Gastrocnemius medialis (tissue), 4 donors: ENCODE measurements at regions of chr19 and their contacts with region 1.

Region 1: GRCh38 chr19:21593934-21594820 is 88.8 kb downstream of the ZNF429 start:
- DNase-seq: peak in 1 of 2 donors; percentile 86
- ATAC-seq: peak; percentile 45 to 56
- H3K4me3 ChIP-seq: peak overlapping the region in 1 of 4 donors; percentile 5
- H3K27ac ChIP-seq: peak overlapping the region in 3 of 4 donors; percentile 70 to 88 (median 83)
- H3K4me1 ChIP-seq: no peaks in the 10 kb centered on the region
- H3K27me3 ChIP-seq: no peaks in the 10 kb centered on the region
- CTCF ChIP-seq: no peak
- POLR2A ChIP-seq: peak in 1 of 2 donors; percentile 24

Region 2: GRCh38 chr19:21492947-21493906 is 101.0 kb before region 1 on chr19:
- in situ Hi-C with region 1: loop called in 1 of 4 experiments (anchors 10 kb)
- intact Hi-C with region 1: loop called (anchors 1 kb)
- DNase-seq: peak in 1 of 2 donors; percentile 87
- ATAC-seq: peak; percentile 63 to 75
- H3K4me3 ChIP-seq: no peak overlapping the region
- H3K27ac ChIP-seq: peak overlapping the region in 3 of 4 donors; percentile 52 to 83 (median 78)
- H3K4me1 ChIP-seq: no peaks in the 10 kb centered on the region
- H3K27me3 ChIP-seq: no peaks in the 10 kb centered on the region
- CTCF ChIP-seq: no peak
- POLR2A ChIP-seq: no peak